Activated T-helper 1 cell treated with anti-CD3 and anti-CD28 coated beads, Interleukin-12 subunit alpha, Interleukin-12 subunit beta, Interleukin-2, Interleukin-4 antibody, amounts not matched to agents 30 ng/mL and 10 ng/mL and 1 ng/mL, durations not matched to agents 14 hours and 24 hours and 36 hours (primary cell): ENCODE measurements at regions of chr3 and their contacts with region 1.

Region 1: GRCh38 chr3:108589146-108589997 is at the starts of genes CIP2A and DZIP3:
- DNase-seq: peak; percentile 80
- H3K4me3 Mint-ChIP-seq: peak within 1 kb of the TSS; percentile 94
- H3K27ac Mint-ChIP-seq: peak within 1 kb of the TSS; percentile 95
- H3K4me1 Mint-ChIP-seq: peaks cover 65% of the 10 kb centered on the region
- H3K27me3 Mint-ChIP-seq: no peaks in the 10 kb centered on the region
- total RNA-seq, gene CIP2A: 49.7 and 54.0 TPM in 2 replicates
- total RNA-seq, gene DZIP3: 5.0 and 5.2 TPM in 2 replicates

Region 2: GRCh38 chr3:107522510-107523288 is 1066.7 kb before region 1 on chr3 and contains the start of gene BBX:
- intact Hi-C with region 1: loop called (anchors 5 kb)
- DNase-seq: peak; percentile 88
- H3K4me3 Mint-ChIP-seq: peak within 1 kb of the TSS; percentile 92
- H3K27ac Mint-ChIP-seq: peak within 1 kb of the TSS; percentile 96
- H3K4me1 Mint-ChIP-seq: peaks cover 32% of the 10 kb centered on the region
- H3K27me3 Mint-ChIP-seq: peaks cover 4% of the 10 kb centered on the region
- total RNA-seq, gene BBX: 38.1 and 45.1 TPM in 2 replicates

Region 3: GRCh38 chr3:108130701-108131474 is 458.5 kb before region 1 on chr3:
- intact Hi-C with region 1: loop called (anchors 5 kb)
- DNase-seq: no peak
- H3K4me3 Mint-ChIP-seq: peak overlapping the region; percentile 24
- H3K27ac Mint-ChIP-seq: peak overlapping the region; percentile 72
- H3K4me1 Mint-ChIP-seq: peaks cover 90% of the 10 kb centered on the region
- H3K27me3 Mint-ChIP-seq: no peaks in the 10 kb centered on the region

Region 4: DNA sequence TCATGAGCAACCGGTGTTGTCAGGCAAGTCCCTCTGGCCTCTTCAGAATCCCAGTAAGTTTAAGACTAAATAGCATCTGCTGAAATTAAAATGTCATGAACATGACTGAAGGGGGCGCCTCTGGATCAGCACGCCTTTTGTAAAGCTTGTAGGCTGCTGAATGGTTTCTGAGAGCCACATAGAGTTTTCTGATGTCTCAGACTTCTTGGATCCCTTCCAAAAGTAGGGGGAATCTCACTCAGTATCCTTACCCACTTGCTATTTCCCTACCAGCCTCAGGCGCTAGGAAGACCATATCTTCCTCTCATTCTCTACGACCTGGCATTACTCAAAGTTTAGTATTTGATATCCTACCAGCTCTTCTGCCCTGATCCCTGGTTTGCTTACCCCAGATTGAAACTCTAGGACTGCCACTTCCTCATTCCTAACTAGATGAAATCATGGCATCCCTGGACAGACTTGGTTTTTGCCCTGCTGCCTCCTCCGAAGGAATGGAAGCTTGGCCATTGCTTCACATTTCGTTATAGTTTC is 435.9 kb before region 1 on chr3:
- intact Hi-C with region 1: no loop called
- DNase-seq: peak; percentile 35
- H3K4me3 Mint-ChIP-seq: no peak overlapping the region
- H3K27ac Mint-ChIP-seq: no peak overlapping the region
- H3K4me1 Mint-ChIP-seq: peaks cover 20% of the 10 kb centered on the region
- H3K27me3 Mint-ChIP-seq: no peaks in the 10 kb centered on the region

Region 5: GRCh38 chr3:108552267-108553159 is 36.9 kb before region 1 on chr3:
- intact Hi-C with region 1: loop called (anchors 5 kb)
- DNase-seq: no peak
- H3K4me3 Mint-ChIP-seq: no peak overlapping the region
- H3K27ac Mint-ChIP-seq: no peak overlapping the region
- H3K4me1 Mint-ChIP-seq: peaks cover 6% of the 10 kb centered on the region
- H3K27me3 Mint-ChIP-seq: no peaks in the 10 kb centered on the region

Region 6: GRCh38 chr3:108599677-108600409 is 10.5 kb after region 1 on chr3:
- intact Hi-C with region 1: loop called (anchors 1 kb)
- DNase-seq: no peak
- H3K4me3 Mint-ChIP-seq: no peak overlapping the region
- H3K27ac Mint-ChIP-seq: no peak overlapping the region
- H3K4me1 Mint-ChIP-seq: peaks cover 44% of the 10 kb centered on the region
- H3K27me3 Mint-ChIP-seq: no peaks in the 10 kb centered on the region

Region 7: DNA sequence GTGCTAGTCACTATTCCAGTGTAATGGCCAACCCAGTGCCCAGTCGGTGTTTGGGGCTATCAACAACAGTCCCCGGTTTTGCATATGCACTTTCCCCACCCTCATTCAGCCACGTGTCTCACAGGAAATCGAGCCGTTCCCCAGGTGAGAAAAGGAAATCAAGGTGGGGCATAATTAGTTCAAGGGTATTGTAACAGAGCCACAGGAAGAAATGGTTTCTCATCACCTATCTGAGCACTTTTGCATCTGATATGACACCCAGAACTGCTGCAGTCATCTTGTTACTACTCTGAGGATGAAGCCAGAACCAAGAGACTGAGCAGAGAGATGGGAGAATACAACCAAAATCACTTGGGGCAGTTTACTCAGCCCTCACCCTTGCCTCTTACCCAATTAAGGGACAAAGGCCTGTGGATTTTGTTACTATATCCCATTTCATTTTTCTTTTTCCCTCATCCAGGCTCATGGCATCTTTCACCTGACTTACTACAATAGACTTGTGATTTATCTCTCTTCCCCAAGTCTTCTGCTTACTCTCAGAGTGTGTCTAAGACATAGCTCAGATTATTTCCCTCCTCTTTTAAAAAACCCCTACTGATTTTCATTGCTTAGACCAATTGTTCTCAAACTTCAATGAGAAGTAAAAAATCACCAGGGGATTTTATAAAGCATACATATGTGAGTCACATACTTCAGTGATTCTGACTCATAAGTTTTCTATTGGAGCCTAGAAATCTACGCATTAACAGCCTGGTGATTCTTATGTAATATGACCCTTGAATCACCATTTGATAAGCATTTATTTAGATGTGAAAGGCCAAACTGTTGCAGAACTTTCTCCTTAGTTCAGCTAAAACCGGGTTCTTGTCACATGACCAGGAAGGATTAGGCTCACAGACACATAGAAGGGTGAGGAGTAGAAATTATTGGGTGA is 273.8 kb after region 1 on chr3:
- intact Hi-C with region 1: loop called (anchors 1 kb)
- DNase-seq: no peak
- H3K4me3 Mint-ChIP-seq: peak overlapping the region; percentile 59
- H3K27ac Mint-ChIP-seq: peak overlapping the region; percentile 96
- H3K4me1 Mint-ChIP-seq: peaks cover 52% of the 10 kb centered on the region
- H3K27me3 Mint-ChIP-seq: no peaks in the 10 kb centered on the region